ENCODE measurements at regions of chr7 and their contacts with region 1.

Region 1: GRCh38 chr7:128883622-128884501 is 21.2 kb downstream of the ATP6V1F start:
- DNase-seq: peak; percentile 95
- ATAC-seq: peak; percentile 41
- H3K4me3 Mint-ChIP-seq: no peak overlapping the region
- H3K27ac Mint-ChIP-seq: no peak overlapping the region
- H3K4me1 Mint-ChIP-seq: peaks cover 5% of the 10 kb centered on the region; the same call in 1 of the 2 replicates
- H3K27me3 Mint-ChIP-seq: no peaks in the 10 kb centered on the region
- CTCF ChIP-seq: peak; percentile 91

Region 2: DNA sequence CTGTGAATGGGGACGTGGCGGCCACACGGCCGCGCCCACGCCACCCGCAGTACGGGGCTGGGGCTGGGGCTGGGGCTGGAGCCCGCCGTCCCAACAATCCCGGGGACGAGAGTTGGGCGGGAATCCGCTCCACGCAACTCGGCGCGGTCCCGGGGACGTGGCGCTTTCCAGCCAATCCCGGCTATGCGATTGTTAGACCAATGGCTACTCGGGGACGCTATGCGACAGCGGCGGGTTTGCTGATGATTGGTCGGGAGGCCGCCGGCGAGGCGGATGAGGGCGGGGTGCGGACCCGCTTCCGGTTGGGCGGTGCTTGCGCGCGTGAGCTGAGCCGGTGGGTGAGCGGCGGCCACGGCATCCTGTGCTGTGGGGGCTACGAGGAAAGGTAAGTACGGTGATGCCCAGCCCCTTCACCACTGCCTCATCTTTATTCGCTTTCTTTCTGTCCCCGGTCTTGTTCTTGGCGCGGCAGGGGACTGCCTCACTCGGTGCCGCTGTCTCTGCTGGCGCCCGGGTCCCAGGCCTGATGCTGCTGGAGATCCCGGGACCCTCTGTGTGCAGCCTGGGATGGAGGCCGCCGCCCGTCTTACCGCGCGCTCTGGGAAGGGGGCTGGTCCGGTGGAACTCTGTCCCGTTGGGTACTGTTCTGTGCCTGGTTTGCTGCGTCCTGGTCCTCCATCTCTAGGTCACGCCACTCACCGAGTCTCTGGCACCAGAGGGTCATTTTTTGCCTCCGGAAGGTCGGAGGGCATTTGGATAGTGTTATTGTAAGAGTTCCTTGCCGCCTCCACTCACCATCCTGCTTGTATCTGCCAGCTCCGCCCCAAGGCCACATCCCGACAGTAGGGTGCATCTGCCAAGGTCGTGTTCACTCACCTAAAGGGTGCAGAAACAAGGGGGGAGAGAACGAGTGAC is 144.6 kb before region 1 on chr7 and contains the start of gene CALU:
- CTCF ChIA-PET with region 1: interaction called, 10 read pairs
- POLR2A ChIA-PET with region 1: no interaction called
- DNase-seq: peak; percentile 96
- ATAC-seq: peak; percentile 97
- H3K4me3 Mint-ChIP-seq: peak within 1 kb of the TSS; percentile 98
- H3K27ac Mint-ChIP-seq: peak within 1 kb of the TSS; percentile 96
- H3K4me1 Mint-ChIP-seq: peaks cover 22% of the 10 kb centered on the region
- H3K27me3 Mint-ChIP-seq: peaks cover 10% of the 10 kb centered on the region
- CTCF ChIP-seq: no peak
- total RNA-seq, gene CALU: 150 to 163 TPM (median 159 TPM) in 3 replicates

Region 3: DNA sequence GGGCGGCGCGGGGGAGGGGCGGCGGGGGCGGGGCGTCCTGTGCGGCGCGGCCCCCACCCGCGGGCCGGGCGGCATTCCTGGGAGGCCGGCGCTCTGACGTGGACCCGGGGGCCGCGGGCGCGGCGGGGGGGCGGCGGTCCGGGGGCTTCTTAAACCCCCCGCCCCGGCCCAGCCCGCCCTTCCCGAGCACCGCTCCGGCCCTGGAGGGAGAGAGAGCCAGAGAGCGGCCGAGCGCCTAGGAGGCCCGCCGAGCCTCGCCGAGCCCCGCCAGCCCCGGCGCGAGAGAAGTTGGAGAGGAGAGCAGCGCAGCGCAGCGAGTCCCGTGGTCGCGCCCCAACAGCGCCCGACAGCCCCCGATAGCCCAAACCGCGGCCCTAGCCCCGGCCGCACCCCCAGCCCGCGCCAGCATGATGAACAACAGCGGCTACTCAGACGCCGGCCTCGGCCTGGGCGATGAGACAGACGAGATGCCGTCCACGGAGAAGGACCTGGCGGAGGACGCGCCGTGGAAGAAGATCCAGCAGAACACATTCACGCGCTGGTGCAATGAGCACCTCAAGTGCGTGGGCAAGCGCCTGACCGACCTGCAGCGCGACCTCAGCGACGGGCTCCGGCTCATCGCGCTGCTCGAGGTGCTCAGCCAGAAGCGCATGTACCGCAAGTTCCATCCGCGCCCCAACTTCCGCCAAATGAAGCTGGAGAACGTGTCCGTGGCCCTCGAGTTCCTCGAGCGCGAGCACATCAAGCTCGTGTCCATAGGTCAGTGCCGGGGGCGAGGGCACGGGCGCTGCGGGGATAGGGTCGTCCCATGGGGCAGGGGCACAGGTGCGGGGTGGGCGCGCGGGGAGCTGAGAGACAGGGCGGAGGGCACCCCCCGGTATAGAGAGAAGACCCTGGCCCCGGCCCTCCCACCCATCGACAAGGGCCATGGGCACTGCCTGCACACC is 53.4 kb before region 1 on chr7 and contains the start of gene FLNC:
- CTCF ChIA-PET with region 1: interaction called, 65 read pairs
- POLR2A ChIA-PET with region 1: interaction called, 3 read pairs
- DNase-seq: peak; percentile 45
- ATAC-seq: peak; percentile 2; the same call in 1 of the 2 replicates
- H3K4me3 Mint-ChIP-seq: peak within 1 kb of the TSS; percentile 77
- H3K27ac Mint-ChIP-seq: no peak within 1 kb of the TSS
- H3K4me1 Mint-ChIP-seq: peaks cover 39% of the 10 kb centered on the region
- H3K27me3 Mint-ChIP-seq: peaks cover 32% of the 10 kb centered on the region
- CTCF ChIP-seq: no peak
- total RNA-seq, gene FLNC: 6.3 to 8.0 TPM (median 6.8 TPM) in 3 replicates

Region 4: DNA sequence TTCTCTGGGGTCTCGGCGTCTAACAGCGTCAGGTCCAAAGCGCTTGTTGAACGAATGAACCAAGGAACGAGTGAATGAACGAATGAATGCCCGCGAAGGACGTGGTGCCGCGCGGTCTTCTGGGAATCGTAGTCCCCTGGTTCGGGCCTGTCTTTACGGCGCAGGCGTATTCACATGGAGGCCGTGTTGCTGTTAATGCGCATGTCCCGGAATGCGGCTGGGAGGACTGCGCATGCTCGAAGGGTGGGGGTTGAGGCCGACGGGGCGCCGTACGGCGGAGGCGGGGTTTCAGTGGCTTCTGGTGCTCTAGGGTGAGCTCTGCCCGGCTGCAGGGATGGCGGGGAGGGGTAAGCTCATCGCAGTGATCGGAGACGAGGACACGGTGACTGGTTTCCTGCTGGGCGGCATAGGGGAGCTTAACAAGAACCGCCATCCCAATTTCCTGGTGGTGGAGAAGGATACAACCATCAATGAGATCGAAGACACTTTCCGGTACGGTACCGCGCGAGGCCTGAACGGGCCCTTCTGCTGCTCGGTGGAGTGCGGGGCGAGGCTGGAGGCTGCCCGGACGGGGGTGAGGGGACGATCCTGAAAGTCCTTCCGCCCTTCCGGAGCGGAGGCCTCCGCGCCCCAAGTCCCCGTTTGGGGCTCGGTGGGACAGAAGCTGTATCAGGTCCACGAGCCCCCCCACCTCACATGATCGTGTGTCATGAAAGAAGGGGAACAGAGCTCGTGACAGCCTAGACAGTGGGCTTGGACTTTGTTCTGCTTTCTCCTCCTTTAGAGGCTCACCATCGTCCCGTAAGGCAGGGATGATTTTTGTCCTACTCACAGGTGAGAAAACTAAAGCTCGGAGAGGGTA is 21.1 kb before region 1 on chr7 and contains the start of gene ATP6V1F:
- CTCF ChIA-PET with region 1: interaction called, 149 read pairs
- POLR2A ChIA-PET with region 1: interaction called, 4 read pairs
- DNase-seq: peak; percentile 99
- ATAC-seq: peak; percentile 85
- H3K4me3 Mint-ChIP-seq: peak within 1 kb of the TSS; percentile 98
- H3K27ac Mint-ChIP-seq: peak within 1 kb of the TSS; percentile 97
- H3K4me1 Mint-ChIP-seq: peaks cover 31% of the 10 kb centered on the region
- H3K27me3 Mint-ChIP-seq: peaks cover 16% of the 10 kb centered on the region
- CTCF ChIP-seq: no peak
- total RNA-seq, gene ATP6V1F: 117 to 121 TPM (median 120 TPM) in 3 replicates

Region 5: DNA sequence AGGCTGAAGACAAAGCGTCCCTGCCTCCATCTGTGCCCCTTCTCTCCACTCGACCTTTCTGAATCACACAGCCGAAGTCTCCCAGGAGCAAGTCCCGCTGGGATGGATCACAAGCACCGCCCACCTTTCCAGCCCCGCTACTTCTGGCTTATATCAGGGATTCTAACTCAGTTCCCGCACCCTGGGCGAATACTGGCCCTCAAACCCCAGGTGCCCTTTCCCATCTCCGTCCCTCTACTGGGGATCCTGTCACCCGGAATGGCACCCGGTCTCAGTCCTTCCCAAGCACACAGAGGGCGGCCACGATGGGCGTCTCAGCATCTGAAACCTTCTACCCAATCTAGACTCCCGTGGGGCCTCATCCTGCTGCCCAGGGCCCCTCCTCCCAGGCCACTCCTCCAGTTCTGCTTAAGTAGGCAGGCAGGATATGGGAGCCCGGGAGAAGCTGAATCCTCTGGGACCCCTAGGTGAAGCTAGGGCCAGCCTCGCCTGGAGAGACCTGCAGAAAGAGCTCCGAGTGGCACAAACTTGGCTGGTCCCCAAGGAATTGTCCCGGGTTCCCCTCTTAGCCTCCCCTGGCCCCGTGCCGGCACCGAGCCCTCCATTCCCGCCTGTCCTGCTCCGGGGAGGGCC is 25.9 kb after region 1 on chr7:
- CTCF ChIA-PET with region 1: interaction called, 18 read pairs
- POLR2A ChIA-PET with region 1: no interaction called
- DNase-seq: peak; percentile 52
- ATAC-seq: peak; percentile 41
- H3K4me3 Mint-ChIP-seq: peak overlapping the region; percentile 72
- H3K27ac Mint-ChIP-seq: no peak overlapping the region
- H3K4me1 Mint-ChIP-seq: peaks cover 28% of the 10 kb centered on the region
- H3K27me3 Mint-ChIP-seq: peaks cover 62% of the 10 kb centered on the region
- CTCF ChIP-seq: no peak

Measured in WTC11 (cell line).